BJ (cell line): ENCODE measurements at regions of chr15 and their contacts with region 1.

Region 1: GRCh38 chr15:38672814-38673670 is 108.4 kb upstream of the RASGRP1 start:
- DNase-seq: no peak
- H3K4me3 ChIP-seq: no peak overlapping the region
- H3K27me3 ChIP-seq: peaks cover 4% of the 10 kb centered on the region; the same call in 1 of the 2 replicates
- CTCF ChIP-seq: no peak

Region 2: DNA sequence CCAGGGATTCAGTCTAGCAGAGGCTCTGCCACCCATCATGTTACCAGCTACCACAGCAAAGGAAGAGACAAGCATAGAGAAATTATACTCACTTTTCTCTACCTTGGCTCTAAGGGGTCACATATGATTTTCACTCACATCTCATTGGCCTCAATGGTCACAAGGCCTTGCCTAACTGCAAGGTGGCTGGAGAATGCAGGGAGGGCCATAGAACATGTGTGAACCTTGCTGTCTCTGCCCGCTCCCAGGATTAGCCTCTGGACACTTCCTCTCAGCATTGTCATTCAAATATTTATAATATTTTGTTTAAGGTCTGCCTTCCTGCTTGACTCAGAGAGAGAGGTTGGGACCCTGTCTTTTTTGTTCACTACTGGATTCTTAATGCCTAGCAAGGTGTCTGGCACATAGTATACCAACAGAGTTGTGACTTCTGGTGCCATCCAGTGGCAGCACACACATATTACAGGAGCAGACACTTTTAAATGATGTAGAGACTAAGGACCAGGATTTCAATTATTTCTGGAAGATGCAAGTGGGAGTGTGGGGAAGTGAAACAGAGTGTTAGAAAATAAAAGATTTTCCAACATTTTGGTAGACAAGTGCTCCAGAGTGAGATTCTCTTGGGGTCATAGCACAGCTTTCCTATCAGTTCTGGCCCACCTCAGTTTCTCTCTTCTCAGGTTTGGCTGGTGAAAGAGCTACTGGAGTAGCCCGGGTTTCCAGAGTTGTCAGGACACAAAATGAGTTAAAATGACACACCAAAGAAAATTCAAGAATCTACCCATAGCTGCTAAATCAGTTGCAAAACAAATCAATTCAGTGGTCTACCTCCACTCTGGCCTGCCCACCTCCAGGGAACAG is 10.6 kb after region 1 on chr15:
- CTCF ChIA-PET with region 1: interaction called, 16 read pairs
- POLR2A ChIA-PET with region 1: no interaction called
- DNase-seq: no peak
- H3K4me3 ChIP-seq: no peak overlapping the region
- H3K27me3 ChIP-seq: no peaks in the 10 kb centered on the region
- CTCF ChIP-seq: peak; percentile 78

Region 3: GRCh38 chr15:39283531-39283930 is 610.5 kb after region 1 on chr15:
- CTCF ChIA-PET with region 1: no interaction called
- POLR2A ChIA-PET with region 1: interaction called, 28 read pairs
- DNase-seq: no peak
- H3K4me3 ChIP-seq: no peak overlapping the region
- H3K27me3 ChIP-seq: no peaks in the 10 kb centered on the region
- CTCF ChIP-seq: no peak